Activated CD4-positive, alpha-beta memory T cell treated with anti-CD3 and anti-CD28 coated beads, Interleukin-2, amount 10 ng/mL, durations not matched to agents 7 days and 5 days (primary cell): ENCODE measurements at regions of chr15 and their contacts with region 1.

Region 1: DNA sequence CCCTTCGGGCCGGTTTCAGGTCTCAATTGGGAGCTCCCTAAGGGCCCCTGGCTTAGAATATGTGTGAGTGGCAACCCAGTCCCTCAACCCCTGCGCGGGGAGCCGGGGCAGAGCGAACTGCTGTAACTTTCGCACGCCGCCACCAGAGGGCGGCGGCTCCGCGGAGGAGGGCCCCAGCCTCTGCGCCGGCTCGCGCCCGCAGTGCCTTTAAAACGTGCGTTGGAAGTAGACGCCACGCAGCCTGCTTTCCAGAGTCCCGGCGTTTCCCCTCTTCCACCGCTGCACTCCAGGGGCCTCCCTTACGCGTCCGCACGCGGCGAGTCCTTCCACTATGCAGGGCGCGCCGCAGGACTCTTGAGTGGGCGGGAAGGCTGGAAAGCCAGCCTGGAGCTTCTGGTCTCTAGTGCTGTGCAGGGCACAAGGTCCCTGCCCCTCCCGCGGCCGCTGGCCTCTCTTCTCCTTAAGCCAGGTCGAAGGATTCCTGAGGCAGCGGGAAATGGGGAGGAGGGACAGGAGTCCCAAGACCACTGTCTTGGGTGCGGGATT is 23.7 kb upstream of the RNU6-1 start:
- DNase-seq: peak; percentile 71
- H3K4me3 Mint-ChIP-seq: no peak overlapping the region
- H3K27ac Mint-ChIP-seq: no peak overlapping the region
- H3K4me1 Mint-ChIP-seq: peaks cover 4% of the 10 kb centered on the region
- H3K27me3 Mint-ChIP-seq: peaks cover 17% of the 10 kb centered on the region

Region 2: DNA sequence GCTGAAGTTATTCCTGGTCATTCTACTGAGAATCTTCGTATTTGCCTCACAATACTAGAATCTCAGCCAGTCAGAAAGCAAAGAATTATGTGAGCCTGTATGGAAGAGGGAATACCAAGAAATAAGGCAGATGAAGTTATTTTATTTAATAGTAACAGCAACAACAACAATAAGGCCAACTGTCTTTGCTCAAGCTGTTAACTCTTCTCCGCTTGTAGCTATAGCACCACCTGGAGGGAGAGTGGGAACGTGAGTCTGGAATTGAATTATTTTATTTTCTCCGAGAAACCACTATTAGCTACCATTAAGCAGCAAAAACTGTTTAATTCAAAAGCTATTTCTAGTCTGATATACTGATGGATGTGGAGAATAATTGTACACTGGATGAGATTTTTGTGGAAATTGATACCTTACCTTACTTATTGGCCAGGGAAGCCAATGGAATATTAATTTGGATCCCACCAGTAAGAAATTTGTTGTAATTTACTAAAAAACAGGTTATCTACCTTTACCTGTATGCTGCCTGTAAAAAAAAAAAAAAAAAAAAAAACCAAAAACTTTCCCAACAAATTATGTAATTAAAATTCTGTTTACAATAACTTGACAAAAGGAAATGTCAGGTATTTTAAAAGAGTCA is 291.5 kb after region 1 on chr15:
- CTCF ChIA-PET with region 1: interaction called, 18 read pairs
- POLR2A ChIA-PET with region 1: no interaction called
- DNase-seq: no peak
- H3K4me3 Mint-ChIP-seq: no peak overlapping the region
- H3K27ac Mint-ChIP-seq: no peak overlapping the region
- H3K4me1 Mint-ChIP-seq: no peaks in the 10 kb centered on the region
- H3K27me3 Mint-ChIP-seq: no peaks in the 10 kb centered on the region

Region 3: DNA sequence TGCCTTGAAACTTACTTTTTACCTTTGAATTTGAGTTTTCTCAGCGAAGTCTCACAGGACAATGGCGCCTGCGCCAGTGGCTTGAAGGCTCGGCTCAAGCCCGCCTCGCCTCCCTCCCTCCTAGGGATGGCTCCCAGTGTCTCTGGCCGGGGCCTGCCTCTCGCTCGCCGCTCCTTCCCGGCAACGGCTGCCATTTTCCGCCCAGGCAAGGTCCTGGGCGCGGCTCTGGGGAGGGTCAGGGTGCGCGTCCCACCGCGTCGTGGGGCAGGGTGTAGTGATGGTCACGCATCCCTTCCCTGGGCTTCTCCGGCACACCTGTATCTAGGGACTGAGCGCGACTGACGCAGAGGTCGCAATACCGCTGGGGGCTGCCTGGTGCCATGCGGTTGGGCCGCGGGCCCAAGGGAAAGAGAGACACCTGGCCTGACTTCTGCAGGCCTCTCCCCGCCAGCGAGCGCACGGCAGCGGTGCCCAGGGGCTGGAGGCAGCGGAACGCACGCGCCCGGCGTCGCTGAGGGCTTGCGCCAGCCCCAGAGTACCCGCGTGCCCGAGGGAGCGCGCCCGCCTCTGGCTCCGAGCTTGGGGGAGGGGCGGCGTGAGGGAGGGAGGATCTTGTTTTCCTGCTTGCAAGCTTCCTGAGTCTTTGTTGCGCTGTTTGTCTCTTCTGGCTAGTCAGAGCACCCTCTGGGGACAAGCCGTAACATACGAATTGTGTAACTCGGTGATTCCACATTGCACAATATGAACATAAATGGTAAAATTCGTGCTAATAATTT is 393.3 kb after region 1 on chr15:
- CTCF ChIA-PET with region 1: no interaction called
- POLR2A ChIA-PET with region 1: no interaction called
- DNase-seq: peak; percentile 69
- H3K4me3 Mint-ChIP-seq: peak overlapping the region; percentile 58
- H3K27ac Mint-ChIP-seq: no peak overlapping the region
- H3K4me1 Mint-ChIP-seq: peaks cover 5% of the 10 kb centered on the region
- H3K27me3 Mint-ChIP-seq: peaks cover 11% of the 10 kb centered on the region